Right lobe of liver (tissue), 6 donors: ENCODE measurements at regions of chr7 and their contacts with region 1.

Region 1: GRCh38 chr7:21507626-21508343 is 35.1 kb upstream of the DNAH11 start:
- DNase-seq: peak in 2 of 3 donors; percentile 26 to 58
- ATAC-seq: peak; percentile 76 to 85 (median 80)
- H3K4me3 ChIP-seq: no peak overlapping the region
- H3K27ac ChIP-seq: no peak overlapping the region
- H3K4me1 ChIP-seq: peaks cover 0 to 12% (median 3%) of the 10 kb centered on the region in 4 donors
- H3K27me3 ChIP-seq: no peaks in the 10 kb centered on the region
- CTCF ChIP-seq: peak; percentile 73 to 83 (median 79)
- POLR2A ChIP-seq: no peak

Region 2: DNA sequence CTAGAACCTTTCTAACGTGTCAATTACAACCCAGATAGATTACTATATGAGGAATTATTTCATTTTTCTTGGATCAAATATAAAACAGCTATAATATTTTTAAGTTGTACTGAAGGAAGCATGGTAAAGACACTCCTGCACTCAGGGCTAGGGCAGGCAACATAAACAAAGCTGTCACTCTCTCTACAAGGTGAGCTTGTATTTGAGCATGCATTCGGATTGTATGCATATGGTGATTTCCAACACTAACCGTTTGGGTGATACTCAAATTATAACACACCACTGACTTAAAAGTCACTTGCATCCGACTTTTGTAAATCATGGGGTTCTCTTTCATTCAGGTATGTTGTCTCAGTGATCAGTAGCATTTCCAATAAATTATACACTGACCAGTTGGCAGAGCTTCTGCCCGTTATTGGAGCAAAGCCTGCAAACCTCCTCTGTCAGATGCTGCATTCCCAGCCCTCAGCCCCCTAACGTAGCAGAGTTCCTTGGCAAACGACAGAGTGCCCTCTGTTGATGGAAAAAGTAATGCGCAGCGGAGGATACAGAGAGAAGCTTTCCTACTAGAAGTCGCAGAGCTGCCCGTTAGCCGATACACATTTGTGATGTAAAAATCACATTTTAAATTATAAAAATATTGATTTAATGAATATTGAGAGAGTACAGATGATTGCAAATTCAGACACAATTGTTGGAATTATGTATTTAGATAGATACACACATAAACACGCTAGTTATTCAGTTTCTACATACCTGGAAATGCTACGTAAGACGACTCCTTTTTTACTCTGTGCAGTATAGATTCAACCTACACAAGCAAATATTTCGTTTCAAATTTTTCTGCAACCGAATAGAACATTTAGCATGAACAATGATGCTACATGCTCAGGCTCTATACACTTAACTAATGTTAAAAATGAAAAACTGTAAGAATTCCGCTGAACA is 253.8 kb before region 1 on chr7:
- intact Hi-C with region 1: loop called in 1 of 2 experiments (anchors 5 kb)
- DNase-seq: peak; percentile 25 to 52 (median 51)
- ATAC-seq: peak; percentile 80 to 86 (median 84)
- H3K4me3 ChIP-seq: no peak overlapping the region
- H3K27ac ChIP-seq: no peak overlapping the region
- H3K4me1 ChIP-seq: no peaks in the 10 kb centered on the region
- H3K27me3 ChIP-seq: peaks cover 0 to 21% of the 10 kb centered on the region in 2 donors
- CTCF ChIP-seq: peak; percentile 41 to 77 (median 64)
- POLR2A ChIP-seq: no peak

Region 3: GRCh38 chr7:21261627-21262594 is 245.9 kb before region 1 on chr7:
- intact Hi-C with region 1: loop called in 1 of 2 experiments (anchors 10 kb)
- DNase-seq: peak in 2 of 3 donors; percentile 29 to 45
- ATAC-seq: peak; percentile 44 to 69 (median 64)
- H3K4me3 ChIP-seq: no peak overlapping the region
- H3K27ac ChIP-seq: no peak overlapping the region
- H3K4me1 ChIP-seq: no peaks in the 10 kb centered on the region
- H3K27me3 ChIP-seq: no peaks in the 10 kb centered on the region
- CTCF ChIP-seq: peak; percentile 35 to 45 (median 40)
- POLR2A ChIP-seq: no peak

Region 4: DNA sequence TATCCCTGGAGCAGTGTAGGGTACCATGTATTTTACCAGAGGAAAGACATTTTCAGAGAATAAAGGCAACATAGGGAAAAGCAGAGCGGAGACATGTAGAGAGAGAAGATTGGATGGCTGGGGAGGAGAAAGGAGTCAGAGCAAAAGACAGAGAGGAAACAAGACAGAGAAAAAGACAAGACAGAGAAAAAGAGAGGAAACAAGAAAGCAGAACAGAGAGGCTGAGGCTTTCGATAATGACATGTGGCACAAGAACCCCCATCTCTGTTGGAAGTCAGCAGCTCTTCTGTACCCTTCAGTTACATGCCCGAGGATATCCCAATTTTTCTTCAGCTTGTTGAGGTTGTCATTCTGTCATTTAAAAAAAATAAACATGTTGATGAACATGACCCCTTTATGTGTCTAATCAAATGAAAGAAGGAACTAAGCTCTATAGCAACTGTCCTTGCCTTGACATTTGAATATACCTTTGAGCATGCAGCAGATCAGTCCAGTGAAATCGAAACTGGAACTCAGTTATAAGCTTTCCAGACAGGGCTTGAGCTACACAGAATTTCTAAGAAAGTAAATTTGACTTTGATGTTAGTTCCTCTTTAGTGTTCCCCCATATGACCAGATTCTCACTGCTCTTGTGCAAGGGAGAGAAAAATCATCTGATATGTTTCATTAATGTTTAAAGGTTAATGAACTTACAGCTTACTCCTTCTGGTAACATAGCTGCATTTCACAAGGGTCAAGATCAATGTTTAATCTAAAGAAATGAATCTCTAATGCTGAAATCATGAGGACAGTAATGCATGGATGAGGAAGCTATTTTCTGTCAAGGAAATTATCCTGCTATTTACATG is 155.0 kb before region 1 on chr7:
- intact Hi-C with region 1: no loop called
- DNase-seq: no peak
- ATAC-seq: peak in 3 of 4 donors; percentile 43 to 69 (median 61)
- H3K4me3 ChIP-seq: no peak overlapping the region
- H3K27ac ChIP-seq: no peak overlapping the region
- H3K4me1 ChIP-seq: no peaks in the 10 kb centered on the region
- H3K27me3 ChIP-seq: no peaks in the 10 kb centered on the region
- CTCF ChIP-seq: no peak
- POLR2A ChIP-seq: no peak

Region 5: DNA sequence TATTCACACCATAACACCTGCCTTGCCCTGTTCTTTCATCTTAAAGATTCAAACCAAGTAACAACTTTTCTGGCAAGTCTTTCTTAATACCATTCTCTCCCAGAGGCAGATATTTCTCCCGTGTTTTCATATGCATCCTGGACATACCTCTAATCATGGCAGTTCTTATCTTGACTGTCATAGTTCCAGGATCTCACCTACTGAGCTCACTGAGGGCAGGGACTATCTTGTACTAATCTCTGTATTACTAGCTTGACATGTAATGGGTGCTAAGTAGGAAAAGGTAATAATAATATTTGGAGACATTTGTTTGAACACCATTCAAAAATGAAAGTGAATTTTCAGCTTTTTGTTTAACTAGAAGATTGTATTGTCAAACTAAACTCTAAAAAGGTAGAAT is 49.9 kb after region 1 on chr7:
- intact Hi-C with region 1: no loop called
- DNase-seq: no peak
- ATAC-seq: no peak
- H3K4me3 ChIP-seq: no peak overlapping the region
- H3K27ac ChIP-seq: no peak overlapping the region
- H3K4me1 ChIP-seq: peaks cover 0 to 4% (median 0%) of the 10 kb centered on the region in 4 donors
- H3K27me3 ChIP-seq: no peaks in the 10 kb centered on the region
- CTCF ChIP-seq: no peak
- POLR2A ChIP-seq: no peak

Region 6: DNA sequence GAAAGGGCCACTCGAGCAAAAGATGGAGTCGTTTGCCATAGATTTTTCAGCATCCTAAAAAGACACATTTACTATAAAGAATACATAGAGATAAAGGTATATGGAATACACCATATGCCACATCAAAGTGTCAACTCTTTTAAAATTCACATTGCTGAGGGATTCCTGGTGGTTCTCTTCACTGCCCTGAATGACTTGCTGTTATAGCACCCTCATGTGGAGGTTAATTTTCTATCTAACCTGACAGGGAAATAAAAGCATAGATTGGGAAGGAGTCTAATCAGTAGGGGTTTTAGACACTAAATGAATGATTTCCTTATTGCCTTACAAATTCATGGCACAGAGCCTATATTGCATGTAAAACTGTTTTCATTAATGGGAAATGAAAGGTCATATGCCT is 61.0 kb after region 1 on chr7:
- intact Hi-C with region 1: no loop called
- DNase-seq: no peak
- ATAC-seq: peak; percentile 53 to 70 (median 58)
- H3K4me3 ChIP-seq: no peak overlapping the region
- H3K27ac ChIP-seq: no peak overlapping the region
- H3K4me1 ChIP-seq: peaks cover 0 to 15% (median 5%) of the 10 kb centered on the region in 4 donors
- H3K27me3 ChIP-seq: no peaks in the 10 kb centered on the region
- CTCF ChIP-seq: peak; percentile 49 to 57 (median 52)
- POLR2A ChIP-seq: no peak

Region 7: DNA sequence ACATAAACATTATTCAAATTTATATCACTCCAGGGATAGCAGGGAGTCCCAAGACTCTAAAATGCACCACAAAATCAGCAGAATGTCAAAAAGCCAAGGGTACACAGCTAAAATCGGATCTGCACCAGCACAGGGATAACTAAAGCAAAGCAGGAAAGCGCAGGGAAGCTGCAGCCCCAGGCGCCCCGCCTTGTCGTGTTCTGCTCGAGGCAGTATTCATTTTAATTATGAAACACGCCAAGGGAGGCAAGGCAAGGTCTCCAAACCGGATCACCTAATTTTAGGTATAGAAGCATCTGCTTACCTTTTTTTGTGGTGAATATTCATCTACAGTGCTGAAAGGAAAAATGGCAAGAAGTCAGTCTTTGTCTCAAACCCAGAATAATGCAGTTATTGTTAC is 649.8 kb after region 1 on chr7:
- intact Hi-C with region 1: no loop called
- DNase-seq: no peak
- ATAC-seq: no peak
- H3K4me3 ChIP-seq: no peak overlapping the region
- H3K27ac ChIP-seq: no peak overlapping the region
- H3K4me1 ChIP-seq: no peaks in the 10 kb centered on the region
- H3K27me3 ChIP-seq: no peaks in the 10 kb centered on the region
- CTCF ChIP-seq: no peak
- POLR2A ChIP-seq: no peak